GM10248 (cell line): ENCODE measurements at regions of chr12 and their contacts with region 1.

Region 1: DNA sequence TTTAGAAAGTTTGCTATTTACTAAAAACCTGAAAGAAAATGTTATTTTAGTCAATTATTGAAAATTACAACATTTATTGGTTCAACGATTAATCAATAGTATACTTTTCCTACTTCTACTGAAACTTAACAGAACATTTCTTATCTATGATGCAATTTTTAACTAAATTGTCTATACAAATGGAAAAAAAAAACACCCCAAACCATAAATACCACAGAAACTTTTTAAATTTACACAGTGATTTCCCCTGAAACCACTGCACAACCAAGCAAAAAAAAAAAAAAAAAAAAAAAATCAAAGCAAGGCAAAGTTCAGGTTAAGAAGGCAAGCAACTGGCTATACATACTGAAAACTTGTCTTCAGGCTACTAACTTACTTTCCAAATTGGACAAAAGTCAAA is 71.9 kb upstream of the POC1B start:
- DNase-seq: no peak
- CTCF ChIP-seq: no peak

Region 2: GRCh38 chr12:89571491-89572195 is 26.1 kb before region 1 on chr12:
- CTCF ChIA-PET with region 1: no interaction called
- POLR2A ChIA-PET with region 1: no interaction called
- DNase-seq: no peak
- CTCF ChIP-seq: no peak

Region 3: DNA sequence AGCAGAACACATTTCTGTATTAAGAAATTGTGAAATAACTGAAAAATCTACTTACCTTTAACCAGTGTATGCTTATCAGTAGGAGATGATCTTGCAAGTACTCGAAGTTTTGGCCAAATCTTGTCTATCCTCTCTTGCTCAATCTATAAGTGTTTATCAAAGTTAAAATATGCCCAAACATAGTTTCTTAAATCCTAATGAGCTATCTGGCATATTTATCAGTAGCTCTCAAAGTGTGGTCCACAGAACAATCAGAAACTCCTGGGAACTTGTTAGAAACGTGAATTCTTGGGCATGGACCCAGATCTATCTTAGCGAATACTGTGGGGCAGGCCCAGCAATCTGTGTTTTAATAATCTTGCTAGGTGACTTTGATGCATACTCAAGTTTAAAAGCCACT is 12.6 kb after region 1 on chr12:
- CTCF ChIA-PET with region 1: interaction called, 14 read pairs
- POLR2A ChIA-PET with region 1: no interaction called
- DNase-seq: no peak
- CTCF ChIP-seq: no peak